Lower lobe of right lung (tissue), 2 donors: ENCODE measurements at regions of chr6 and their contacts with region 1.

Region 1: GRCh38 chr6:158611541-158612370 is 32.8 kb downstream of the DYNLT1 start:
- DNase-seq: no peak
- ATAC-seq: peak; percentile 91
- H3K4me3 ChIP-seq: no peak overlapping the region
- H3K27ac ChIP-seq: peak overlapping the region; percentile 14
- H3K4me1 ChIP-seq: no peaks in the 10 kb centered on the region
- H3K27me3 ChIP-seq: no peaks in the 10 kb centered on the region
- CTCF ChIP-seq: no peak

Region 2: DNA sequence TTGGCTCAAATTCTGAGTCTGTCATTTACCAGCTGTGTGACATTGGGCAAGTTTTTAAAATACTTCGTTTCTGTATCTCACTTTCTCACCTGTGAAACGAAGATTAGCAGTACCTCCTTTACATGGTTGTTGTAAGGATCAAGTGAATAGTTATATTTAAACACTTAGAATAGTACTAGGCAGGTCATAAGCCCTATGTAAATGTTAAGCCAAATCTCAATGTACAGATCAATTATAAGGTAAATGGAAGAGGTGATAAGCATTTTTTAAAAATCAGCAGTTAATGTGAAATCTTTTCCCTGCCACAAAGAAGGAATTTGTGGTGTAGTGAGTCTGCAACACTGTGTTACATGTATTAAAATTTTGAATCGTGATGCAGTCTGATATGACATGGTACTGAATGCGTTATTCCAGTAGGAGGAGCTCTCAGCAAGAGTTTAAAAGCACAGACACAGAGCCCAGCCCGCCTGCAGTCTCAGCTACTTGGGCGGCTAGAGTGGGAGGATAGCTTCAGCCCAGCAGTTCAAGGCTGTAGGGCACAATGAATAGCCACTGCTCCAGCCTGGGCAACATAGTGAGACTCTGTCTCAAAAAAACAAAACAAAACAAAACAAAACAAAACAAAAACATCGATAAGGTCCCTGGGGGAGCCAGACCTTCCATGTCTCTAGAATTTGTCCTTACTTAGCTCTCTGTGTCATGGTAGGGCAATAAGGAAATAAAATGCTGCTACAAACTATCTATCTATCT is 397.7 kb before region 1 on chr6:
- intact Hi-C with region 1: loop called (anchors 10 kb)
- DNase-seq: peak; percentile 74
- ATAC-seq: peak; percentile 95 to 97
- H3K4me3 ChIP-seq: no peak overlapping the region
- H3K27ac ChIP-seq: no peak overlapping the region
- H3K4me1 ChIP-seq: no peaks in the 10 kb centered on the region
- H3K27me3 ChIP-seq: no peaks in the 10 kb centered on the region
- CTCF ChIP-seq: peak; percentile 73